CD4-positive, alpha-beta memory T cell (primary cell): ENCODE measurements at regions of chr1 and their contacts with region 1.

Region 1: DNA sequence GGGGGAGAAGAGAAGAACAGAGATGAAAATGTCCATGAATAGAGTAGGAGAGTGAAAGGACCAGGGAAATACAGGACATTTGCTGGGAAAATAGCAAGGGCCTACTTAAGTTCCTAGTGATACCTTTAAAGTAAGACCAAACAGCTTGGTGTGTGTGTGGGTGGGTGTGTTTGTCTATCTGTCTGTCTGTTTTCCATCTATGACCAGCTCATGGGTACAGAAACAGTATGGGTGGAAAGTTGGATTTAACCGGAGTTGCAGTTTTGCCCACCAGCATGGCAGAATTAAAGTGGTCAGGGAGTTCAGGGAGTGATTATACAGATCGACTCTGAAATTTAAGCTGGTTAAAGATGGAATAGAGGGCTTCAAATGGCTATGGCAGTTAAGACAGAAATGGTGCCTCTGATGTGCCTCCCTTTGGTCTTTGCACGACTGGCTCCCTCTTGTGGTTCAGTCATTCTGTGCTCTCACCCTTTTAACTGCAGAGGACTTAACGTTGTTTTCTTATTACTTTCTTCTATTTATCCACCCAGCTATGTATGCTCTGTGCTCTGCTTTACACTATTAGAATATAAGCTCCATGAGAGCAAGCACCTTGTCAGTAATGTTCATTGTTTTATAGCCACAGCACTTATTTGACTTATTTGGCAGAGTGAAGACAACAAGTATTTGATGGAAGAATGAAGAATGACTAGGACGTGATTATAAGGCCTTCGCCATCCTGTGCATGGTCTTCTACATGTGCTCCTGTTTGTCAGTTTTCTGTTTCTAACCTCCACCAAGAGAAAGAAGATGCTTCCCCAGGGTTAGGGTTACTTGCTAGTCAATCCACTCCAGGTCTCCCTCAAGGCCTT is 72.7 kb upstream of the AK4 start:
- DNase-seq: peak; percentile 71 to 77 (median 73)
- H3K4me3 ChIP-seq: no peak overlapping the region
- H3K4me3 Mint-ChIP-seq: no peak overlapping the region
- H3K27ac ChIP-seq: no peak overlapping the region
- H3K27ac Mint-ChIP-seq: peak overlapping the region in 2 of 7 donors; percentile 14 to 16
- H3K4me1 ChIP-seq: peaks cover 2% of the 10 kb centered on the region
- H3K4me1 Mint-ChIP-seq: peaks cover 10 to 27% (median 12%) of the 10 kb centered on the region in 4 donors
- H3K27me3 ChIP-seq: no peaks in the 10 kb centered on the region
- H3K27me3 Mint-ChIP-seq: peaks cover 3 to 6% of the 10 kb centered on the region in 2 donors

Region 2: DNA sequence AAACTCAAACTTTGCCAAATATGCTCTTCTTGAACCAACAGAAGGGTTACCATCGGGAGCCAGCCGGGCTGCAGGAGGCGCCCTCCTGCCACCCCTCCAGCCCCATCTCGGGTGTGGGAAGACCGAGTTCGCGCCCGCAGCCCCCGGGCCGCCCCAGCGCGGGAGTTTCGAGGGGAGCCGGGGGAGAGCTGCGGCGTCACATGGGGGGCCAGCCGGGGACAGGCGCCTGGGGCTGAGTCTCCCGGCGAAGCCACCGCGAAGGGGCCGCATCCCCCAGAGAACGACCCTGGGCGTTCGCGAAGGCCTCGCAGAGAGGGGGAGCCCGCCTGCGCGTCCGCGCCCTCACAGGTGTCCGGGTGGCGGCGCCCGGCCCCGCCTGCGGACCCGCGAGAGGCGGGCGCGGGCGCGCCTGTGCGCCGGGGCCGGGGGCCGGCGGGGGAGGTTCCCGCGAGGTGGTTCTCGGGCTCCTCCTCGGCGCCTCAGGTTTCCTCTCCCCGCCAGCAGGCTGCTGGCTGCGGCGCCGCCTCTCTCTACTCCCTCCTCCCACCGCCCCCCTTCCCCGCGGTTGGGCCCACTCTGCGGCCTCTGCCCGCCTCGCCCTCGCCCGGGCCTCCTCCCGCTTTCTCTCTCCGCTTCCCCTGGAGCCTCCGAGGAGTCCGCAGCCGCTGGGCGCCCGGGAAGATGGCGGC is 330.7 kb before region 1 on chr1 and contains the start of gene RAVER2:
- CTCF ChIA-PET with region 1: no interaction called
- POLR2A ChIA-PET with region 1: no interaction called
- intact Hi-C with region 1: loop called (anchors 1 kb)
- DNase-seq: peak; percentile 53 to 75 (median 62)
- H3K4me3 ChIP-seq: peak within 1 kb of the TSS; percentile 17 to 54
- H3K4me3 Mint-ChIP-seq: peak within 1 kb of the TSS; percentile 87 to 94 (median 92)
- H3K27ac ChIP-seq: peak within 1 kb of the TSS; percentile 43
- H3K27ac Mint-ChIP-seq: peak within 1 kb of the TSS; percentile 77 to 90 (median 82)
- H3K4me1 ChIP-seq: peaks cover 13% of the 10 kb centered on the region
- H3K4me1 Mint-ChIP-seq: peaks cover 9 to 30% (median 22%) of the 10 kb centered on the region in 4 donors
- H3K27me3 ChIP-seq: peaks cover 3% of the 10 kb centered on the region
- H3K27me3 Mint-ChIP-seq: peaks cover 2 to 3% of the 10 kb centered on the region in 2 donors
- total RNA-seq, gene RAVER2: 1.7 to 2.1 TPM

Region 3: DNA sequence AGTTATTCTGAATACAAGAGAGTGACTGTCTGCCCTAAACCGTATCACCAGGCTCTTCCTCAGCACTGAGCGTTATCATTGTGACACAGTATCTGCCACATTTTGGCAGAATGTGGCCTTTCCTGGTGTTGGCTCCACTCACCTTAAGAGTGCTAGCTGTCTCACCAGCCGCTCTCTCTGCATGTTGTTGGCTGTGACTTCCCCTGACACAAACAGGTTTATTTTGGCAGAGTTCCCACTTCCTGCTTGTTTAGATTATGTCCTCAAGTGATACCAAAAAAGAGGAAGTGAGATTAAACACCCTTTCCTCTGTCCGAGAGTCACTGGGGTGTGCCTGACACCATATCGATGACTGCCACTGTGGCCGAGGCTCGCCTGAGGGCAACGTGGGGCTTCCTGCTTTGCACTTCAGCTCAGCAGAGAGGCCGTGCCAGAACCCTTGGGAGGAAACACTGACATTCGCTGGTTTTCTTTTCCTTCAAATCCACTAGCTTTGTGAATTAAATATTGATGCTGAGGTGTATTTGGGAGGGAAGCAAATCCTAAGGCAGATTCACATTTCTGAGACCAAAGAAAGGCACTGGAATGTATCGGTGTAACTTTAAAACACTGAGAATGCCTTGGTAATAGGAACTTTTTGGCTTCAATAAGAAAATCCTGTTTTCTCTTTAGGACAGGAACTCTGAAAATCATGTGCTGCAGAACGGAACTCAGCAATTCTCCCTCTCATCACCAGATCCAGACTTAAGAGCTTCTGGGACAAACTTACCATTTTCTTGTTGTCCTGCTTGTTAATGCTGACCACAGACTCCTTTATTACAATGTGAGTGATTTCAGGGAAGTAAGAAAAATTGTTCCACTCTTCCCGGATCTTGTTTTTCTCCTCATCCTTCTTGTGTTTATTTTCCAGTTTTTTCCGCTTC is 211.1 kb before region 1 on chr1:
- CTCF ChIA-PET with region 1: interaction called, 7 read pairs
- POLR2A ChIA-PET with region 1: no interaction called
- intact Hi-C with region 1: loop called (anchors 1 kb)
- DNase-seq: peak; percentile 71 to 77 (median 73)
- H3K4me3 ChIP-seq: no peak overlapping the region
- H3K4me3 Mint-ChIP-seq: peak overlapping the region in 7 of 8 donors; percentile 7 to 79 (median 64)
- H3K27ac ChIP-seq: peak overlapping the region; percentile 48
- H3K27ac Mint-ChIP-seq: peak overlapping the region; percentile 63 to 93 (median 89)
- H3K4me1 ChIP-seq: peaks cover 29% of the 10 kb centered on the region
- H3K4me1 Mint-ChIP-seq: peaks cover 30 to 58% (median 46%) of the 10 kb centered on the region in 4 donors
- H3K27me3 ChIP-seq: no peaks in the 10 kb centered on the region
- H3K27me3 Mint-ChIP-seq: no peaks in the 10 kb centered on the region

Region 4: DNA sequence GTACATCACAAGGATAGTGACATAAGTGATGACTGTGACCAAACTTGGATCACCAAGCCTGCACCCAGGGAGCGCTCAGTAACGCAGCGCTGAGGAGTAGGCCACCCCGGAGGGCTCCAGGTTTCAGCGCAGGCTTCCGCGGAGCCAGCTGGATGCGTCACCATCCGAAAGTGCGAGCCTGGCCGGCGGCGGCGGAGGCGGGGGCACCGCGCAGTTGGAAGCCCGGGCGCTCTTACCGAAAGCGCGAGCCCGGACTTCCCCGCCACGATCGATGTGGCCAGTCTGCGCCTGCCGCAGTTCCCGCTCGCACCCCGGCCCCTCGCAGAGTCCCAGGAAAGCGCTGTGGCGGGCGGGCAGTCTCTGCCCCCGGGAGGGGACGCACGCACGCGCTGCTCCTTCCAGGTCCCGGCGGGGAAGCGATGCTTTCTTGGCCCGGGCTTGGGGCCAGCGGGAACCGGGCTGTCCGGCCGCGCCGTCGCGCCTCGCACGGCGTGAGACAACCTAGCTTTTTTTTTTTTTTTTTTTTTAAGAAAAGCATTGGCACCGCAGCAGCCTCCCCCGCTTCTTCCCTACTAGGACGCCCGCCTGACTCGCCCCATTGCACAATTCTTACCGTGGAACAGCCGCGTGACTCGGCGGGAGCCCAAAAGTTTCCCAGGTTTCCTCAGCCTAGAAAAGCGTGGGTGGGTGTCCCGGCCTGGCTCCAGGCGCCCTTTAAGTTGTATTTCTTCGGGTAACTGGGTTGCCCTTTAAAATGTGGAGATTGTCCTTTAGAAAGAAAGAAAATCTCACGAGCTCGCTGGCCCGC is 72.6 kb before region 1 on chr1:
- CTCF ChIA-PET with region 1: interaction called, 11 read pairs
- POLR2A ChIA-PET with region 1: no interaction called
- intact Hi-C with region 1: no loop called
- DNase-seq: peak; percentile 67 to 87 (median 72)
- H3K4me3 ChIP-seq: peak overlapping the region; percentile 33 to 49
- H3K4me3 Mint-ChIP-seq: peak overlapping the region; percentile 77 to 90 (median 89)
- H3K27ac ChIP-seq: peak overlapping the region; percentile 52
- H3K27ac Mint-ChIP-seq: peak overlapping the region; percentile 57 to 96 (median 89)
- H3K4me1 ChIP-seq: peaks cover 25% of the 10 kb centered on the region
- H3K4me1 Mint-ChIP-seq: peaks cover 21 to 43% (median 30%) of the 10 kb centered on the region in 4 donors
- H3K27me3 ChIP-seq: no peaks in the 10 kb centered on the region
- H3K27me3 Mint-ChIP-seq: no peaks in the 10 kb centered on the region

Region 5: DNA sequence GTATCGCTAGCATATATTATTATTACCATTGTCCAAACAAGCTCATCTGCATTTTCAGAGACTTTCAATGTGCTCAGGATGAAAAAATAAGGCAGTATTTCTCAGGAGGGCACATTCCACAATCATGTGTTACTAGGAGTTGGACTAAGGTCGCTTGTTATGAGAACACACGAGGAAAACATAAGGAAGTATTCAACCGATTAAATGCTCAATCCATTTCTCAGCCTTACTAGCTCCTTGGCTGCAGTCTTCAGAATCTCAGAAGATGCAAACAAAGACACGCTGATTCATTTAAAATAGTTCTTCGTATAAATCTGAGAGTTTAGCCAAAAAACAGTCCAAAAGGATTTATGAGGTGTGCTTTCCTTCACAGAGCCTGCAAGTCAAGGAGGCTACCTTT is 27.0 kb before region 1 on chr1:
- CTCF ChIA-PET with region 1: interaction called, 22 read pairs
- POLR2A ChIA-PET with region 1: interaction called, 4 read pairs
- intact Hi-C with region 1: no loop called
- DNase-seq: no peak
- H3K4me3 ChIP-seq: no peak overlapping the region
- H3K4me3 Mint-ChIP-seq: peak overlapping the region in 2 of 8 donors; percentile 17 to 30
- H3K27ac ChIP-seq: no peak overlapping the region
- H3K27ac Mint-ChIP-seq: peak overlapping the region in 1 of 7 donors; percentile 53
- H3K4me1 ChIP-seq: peaks cover 32% of the 10 kb centered on the region
- H3K4me1 Mint-ChIP-seq: peaks cover 43 to 72% (median 54%) of the 10 kb centered on the region in 4 donors
- H3K27me3 ChIP-seq: no peaks in the 10 kb centered on the region
- H3K27me3 Mint-ChIP-seq: no peaks in the 10 kb centered on the region

Region 6: DNA sequence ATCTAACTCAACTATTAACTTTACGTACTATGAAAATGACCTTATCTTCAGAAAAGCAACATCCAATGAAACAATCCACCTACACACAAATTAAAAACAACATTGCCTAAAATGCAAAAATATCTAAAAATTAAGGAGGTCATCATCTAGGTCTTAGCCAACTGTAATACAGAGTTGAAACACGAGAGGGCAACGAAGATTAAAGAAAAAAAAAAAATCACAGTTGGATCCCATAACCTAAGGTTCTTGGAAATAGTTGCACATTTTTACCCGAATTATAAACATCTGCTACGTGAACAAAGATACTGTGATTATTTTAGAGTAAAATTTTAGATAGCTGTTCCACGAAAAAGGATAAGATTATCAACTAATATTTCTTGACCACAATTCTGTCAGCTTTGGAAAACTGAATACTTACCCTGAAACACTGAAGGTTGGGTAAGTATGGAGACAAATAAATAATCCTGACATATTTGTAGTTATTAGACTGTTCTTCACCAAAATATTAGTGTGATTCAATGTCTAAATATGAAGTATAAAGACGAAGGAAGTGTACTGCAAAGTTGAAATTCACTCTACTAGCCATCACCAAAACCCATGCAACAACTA is 15.3 kb before region 1 on chr1:
- CTCF ChIA-PET with region 1: interaction called, 201 read pairs
- POLR2A ChIA-PET with region 1: interaction called, 60 read pairs
- intact Hi-C with region 1: loop called (anchors 1 kb)
- DNase-seq: peak in 2 of 5 donors; percentile 25 to 35
- H3K4me3 ChIP-seq: no peak overlapping the region
- H3K4me3 Mint-ChIP-seq: peak overlapping the region in 3 of 8 donors; percentile 7 to 33 (median 32)
- H3K27ac ChIP-seq: no peak overlapping the region
- H3K27ac Mint-ChIP-seq: peak overlapping the region in 6 of 7 donors; percentile 3 to 83 (median 52)
- H3K4me1 ChIP-seq: peaks cover 51% of the 10 kb centered on the region
- H3K4me1 Mint-ChIP-seq: peaks cover 41 to 54% (median 51%) of the 10 kb centered on the region in 4 donors
- H3K27me3 ChIP-seq: no peaks in the 10 kb centered on the region
- H3K27me3 Mint-ChIP-seq: no peaks in the 10 kb centered on the region

Region 7: GRCh38 chr1:65200411-65200810 is 125.1 kb after region 1 on chr1:
- CTCF ChIA-PET with region 1: no interaction called
- POLR2A ChIA-PET with region 1: no interaction called
- intact Hi-C with region 1: no loop called
- DNase-seq: no peak
- H3K4me3 ChIP-seq: no peak overlapping the region
- H3K4me3 Mint-ChIP-seq: no peak overlapping the region
- H3K27ac ChIP-seq: no peak overlapping the region
- H3K27ac Mint-ChIP-seq: no peak overlapping the region
- H3K4me1 ChIP-seq: no peaks in the 10 kb centered on the region
- H3K4me1 Mint-ChIP-seq: no peaks in the 10 kb centered on the region
- H3K27me3 ChIP-seq: no peaks in the 10 kb centered on the region
- H3K27me3 Mint-ChIP-seq: peaks cover 2 to 13% of the 10 kb centered on the region in 2 donors